HepG2 (cell line): ENCODE measurements at regions of chr20 and their contacts with region 1.

Region 1: GRCh38 chr20:45890985-45891983 is at the starts of genes CTSA and NEURL2:
- DNase-seq: peak; percentile 98
- ATAC-seq: peak; percentile 80
- H3K4me3 ChIP-seq: peak within 1 kb of the TSS; percentile 86 to 98 (median 96)
- H3K27ac ChIP-seq: peak within 1 kb of the TSS; percentile 87
- H3K4me1 ChIP-seq: peaks cover 43% of the 10 kb centered on the region
- H3K27me3 ChIP-seq: no peaks in the 10 kb centered on the region
- CTCF ChIP-seq: peak; percentile 79
- EP300 ChIP-seq: peak; percentile 87 to 97
- POLR2A ChIP-seq: peak; percentile 90 to 94
- RAD21 ChIP-seq: peak; percentile 66
- total RNA-seq, gene CTSA: 63.8 and 202 TPM in 2 replicates
- total RNA-seq, gene NEURL2: 4.1 and 9.7 TPM in 2 replicates

Region 2: GRCh38 chr20:45833030-45833882 is 58.0 kb before region 1 on chr20 and contains the start of gene SNX21:
- CTCF ChIA-PET with region 1: no interaction called
- POLR2A ChIA-PET with region 1: interaction called, 19 read pairs
- in situ Hi-C with region 1: no loop called
- intact Hi-C with region 1: loop called (anchors 2 kb)
- DNase-seq: peak; percentile 84
- ATAC-seq: peak; percentile 92
- H3K4me3 ChIP-seq: peak within 1 kb of the TSS; percentile 71 to 87 (median 86)
- H3K27ac ChIP-seq: peak within 1 kb of the TSS; percentile 69
- H3K4me1 ChIP-seq: peaks cover 67% of the 10 kb centered on the region
- H3K27me3 ChIP-seq: no peaks in the 10 kb centered on the region
- CTCF ChIP-seq: no peak; the same call in 1 of the 2 replicates
- EP300 ChIP-seq: no peak; a peak in 1 of 4 replicates
- POLR2A ChIP-seq: peak; percentile 83 to 89; a peak in 3 of 4 replicates
- RAD21 ChIP-seq: no peak
- total RNA-seq, gene SNX21: 9.3 and 12.8 TPM in 2 replicates

Region 3: DNA sequence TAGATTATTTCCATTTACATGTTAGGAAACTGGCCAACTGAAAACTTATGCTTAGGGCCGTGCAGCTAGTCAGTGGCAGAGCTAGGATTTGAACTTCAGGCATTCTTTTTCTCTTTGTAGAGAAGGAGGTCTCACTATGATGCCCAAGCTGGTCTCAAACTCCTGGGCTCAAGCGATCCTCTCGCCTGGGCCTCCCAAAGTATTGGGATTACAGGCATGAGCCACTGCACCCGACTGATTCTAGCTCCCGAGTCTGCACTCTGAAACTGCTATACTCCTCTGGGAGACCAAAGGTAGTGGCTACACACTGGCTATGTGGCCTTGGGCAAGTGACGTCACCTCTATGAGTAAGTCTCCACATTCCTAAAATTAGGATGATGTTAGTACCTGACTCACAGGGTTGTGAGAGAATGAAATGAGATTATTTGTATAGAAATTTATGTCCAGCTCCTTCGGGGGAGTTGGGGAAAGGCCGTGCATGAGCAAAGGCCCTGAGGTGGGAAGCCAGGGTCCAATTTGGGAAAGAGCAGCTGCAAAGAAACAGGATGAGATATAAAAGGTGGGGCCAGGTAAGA is 14.3 kb after region 1 on chr20:
- CTCF ChIA-PET with region 1: no interaction called
- POLR2A ChIA-PET with region 1: interaction called, 164 read pairs
- in situ Hi-C with region 1: no loop called
- intact Hi-C with region 1: loop called (anchors 1 kb)
- DNase-seq: peak; percentile 87
- ATAC-seq: peak; percentile 67
- H3K4me3 ChIP-seq: no peak overlapping the region
- H3K27ac ChIP-seq: peak overlapping the region; percentile 21
- H3K4me1 ChIP-seq: peaks cover 50% of the 10 kb centered on the region
- H3K27me3 ChIP-seq: no peaks in the 10 kb centered on the region
- CTCF ChIP-seq: no peak
- EP300 ChIP-seq: no peak
- POLR2A ChIP-seq: peak in 1 of 2 experiments; percentile 59; a peak in 2 of 4 replicates
- RAD21 ChIP-seq: no peak

Region 4: GRCh38 chr20:45924391-45925261 is 33.3 kb after region 1 on chr20:
- CTCF ChIA-PET with region 1: no interaction called
- POLR2A ChIA-PET with region 1: interaction called, 100 read pairs
- in situ Hi-C with region 1: no loop called
- intact Hi-C with region 1: loop called (anchors 2 kb)
- DNase-seq: peak; percentile 66
- ATAC-seq: peak; percentile 15
- H3K4me3 ChIP-seq: peak overlapping the region in 2 of 3 experiments; percentile 20 to 52; a peak in 2 of 6 replicates
- H3K27ac ChIP-seq: no peak overlapping the region
- H3K4me1 ChIP-seq: peaks cover 84% of the 10 kb centered on the region
- H3K27me3 ChIP-seq: no peaks in the 10 kb centered on the region; a peak in 1 of 5 replicates
- CTCF ChIP-seq: no peak
- EP300 ChIP-seq: no peak
- POLR2A ChIP-seq: no peak
- RAD21 ChIP-seq: peak; percentile 25; the same call in 1 of the 2 replicates

Region 5: GRCh38 chr20:45946149-45946970 is 55.1 kb after region 1 on chr20:
- CTCF ChIA-PET with region 1: no interaction called
- POLR2A ChIA-PET with region 1: interaction called, 60 read pairs
- in situ Hi-C with region 1: no loop called
- intact Hi-C with region 1: loop called (anchors 1 kb)
- DNase-seq: peak; percentile 97
- ATAC-seq: peak; percentile 83
- H3K4me3 ChIP-seq: no peak overlapping the region
- H3K27ac ChIP-seq: peak overlapping the region; percentile 65
- H3K4me1 ChIP-seq: peaks cover 30% of the 10 kb centered on the region
- H3K27me3 ChIP-seq: no peaks in the 10 kb centered on the region
- CTCF ChIP-seq: peak; percentile 46
- EP300 ChIP-seq: peak; percentile 64 to 80; a peak in 3 of 4 replicates
- POLR2A ChIP-seq: peak; percentile 2 to 37; a peak in 2 of 4 replicates
- RAD21 ChIP-seq: peak; percentile 12; the same call in 1 of the 2 replicates

Region 6: DNA sequence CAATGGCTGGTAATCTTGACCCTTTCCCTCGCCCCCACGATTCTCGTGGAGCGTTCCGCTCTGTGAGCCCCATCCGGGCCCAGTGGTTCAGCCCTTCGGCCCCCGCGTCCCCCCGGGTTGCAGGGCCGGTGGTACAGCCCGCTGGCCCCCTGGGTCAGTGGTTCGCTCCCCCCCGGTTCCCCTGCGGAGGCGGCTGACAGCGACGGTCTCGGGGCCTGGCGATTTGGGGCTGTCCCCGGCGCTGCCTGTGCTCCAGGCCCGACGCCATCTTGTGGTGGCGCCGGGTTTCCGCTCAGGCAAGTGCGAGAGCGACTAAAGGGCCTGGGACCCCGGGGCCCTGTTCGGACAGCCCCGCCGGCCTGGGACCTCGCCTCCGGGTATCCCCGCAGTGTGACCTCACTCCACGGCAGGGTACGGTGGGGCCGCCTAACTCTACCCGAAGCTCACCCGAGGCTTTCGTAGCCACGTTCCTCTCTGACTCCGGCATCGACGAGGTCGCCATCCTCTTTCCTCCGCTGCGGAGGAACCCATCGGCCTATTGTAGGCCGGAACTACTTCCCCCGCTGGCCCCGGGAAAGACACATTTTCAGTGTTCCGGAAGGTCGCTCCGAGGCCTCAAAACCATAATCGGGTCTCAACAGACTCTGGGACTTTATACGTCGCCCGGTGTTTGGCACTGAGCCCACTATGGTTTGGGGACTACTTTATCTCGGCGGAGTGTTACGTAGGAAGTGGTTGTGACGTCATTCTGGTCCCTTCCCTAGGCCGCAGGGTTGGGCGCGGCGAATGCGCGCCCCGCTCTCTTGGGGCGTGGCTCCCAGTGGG is 80.6 kb after region 1 on chr20 and contains the start of gene ZNF335:
- CTCF ChIA-PET with region 1: interaction called, 3 read pairs
- POLR2A ChIA-PET with region 1: interaction called, 27 read pairs
- in situ Hi-C with region 1: no loop called
- intact Hi-C with region 1: no loop called
- DNase-seq: peak; percentile 96
- ATAC-seq: peak; percentile 82
- H3K4me3 ChIP-seq: peak within 1 kb of the TSS; percentile 82 to 97 (median 96)
- H3K27ac ChIP-seq: peak within 1 kb of the TSS; percentile 98
- H3K4me1 ChIP-seq: peaks cover 26% of the 10 kb centered on the region
- H3K27me3 ChIP-seq: peaks cover 0 to 7% of the 10 kb centered on the region in 2 experiments; a peak in 1 of 5 replicates
- CTCF ChIP-seq: peak; percentile 60
- EP300 ChIP-seq: peak in 1 of 2 experiments; percentile 39; a peak in 3 of 4 replicates
- POLR2A ChIP-seq: peak; percentile 65 to 95; a peak in 3 of 4 replicates
- RAD21 ChIP-seq: peak; percentile 44
- total RNA-seq, gene ZNF335: 6.0 and 13.7 TPM in 2 replicates

Region 7: GRCh38 chr20:46087161-46087560 is 195.9 kb after region 1 on chr20:
- CTCF ChIA-PET with region 1: no interaction called
- POLR2A ChIA-PET with region 1: no interaction called
- in situ Hi-C with region 1: no loop called
- intact Hi-C with region 1: no loop called
- DNase-seq: peak; percentile 21
- ATAC-seq: no peak
- H3K4me3 ChIP-seq: no peak overlapping the region
- H3K27ac ChIP-seq: no peak overlapping the region
- H3K4me1 ChIP-seq: peaks cover 52% of the 10 kb centered on the region
- H3K27me3 ChIP-seq: no peaks in the 10 kb centered on the region; a peak in 1 of 5 replicates
- CTCF ChIP-seq: peak; percentile 34
- EP300 ChIP-seq: no peak
- POLR2A ChIP-seq: no peak
- RAD21 ChIP-seq: peak; percentile 18; the same call in 1 of the 2 replicates